SK-N-SH (cell line): ENCODE measurements at regions of chr19 and their contacts with region 1.

Region 1: DNA sequence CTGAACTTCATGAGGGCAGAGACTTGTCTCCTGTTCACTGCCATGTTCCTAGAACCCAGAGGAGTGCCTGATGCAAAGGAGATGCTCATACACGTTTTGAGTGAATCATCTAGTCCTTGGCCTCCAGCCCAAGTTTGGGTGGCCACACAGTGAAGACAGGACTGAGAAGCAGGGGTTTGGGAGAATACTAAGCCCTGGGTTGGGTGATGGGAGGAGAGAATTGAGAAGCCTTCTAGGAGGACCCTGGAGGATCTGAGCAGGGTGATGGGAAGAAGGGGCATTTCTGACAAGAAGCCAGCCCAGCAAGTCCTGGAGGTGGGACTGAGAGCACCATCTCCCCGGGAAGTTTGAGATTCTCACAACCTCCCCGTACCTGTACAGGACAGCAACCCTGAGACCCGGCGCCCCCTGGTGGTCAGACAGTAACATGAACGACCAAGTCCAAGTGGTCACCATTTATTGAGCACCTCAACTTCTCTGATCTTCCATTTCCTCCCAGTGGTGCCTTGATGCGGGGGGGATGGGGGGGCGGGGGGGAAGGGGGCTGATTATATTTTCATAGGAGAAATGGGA is 11.0 kb downstream of the CTU1 start:
- DNase-seq: peak; percentile 76
- H3K4me3 ChIP-seq: no peak overlapping the region
- H3K27ac ChIP-seq: no peak overlapping the region
- H3K4me1 ChIP-seq: no peaks in the 10 kb centered on the region; a peak in 1 of 4 replicates
- H3K27me3 ChIP-seq: no peaks in the 10 kb centered on the region
- CTCF ChIP-seq: peak; percentile 64
- EP300 ChIP-seq: no peak
- RAD21 ChIP-seq: 0 out of 2 replicates have a peak, but pooled peaks have one; percentile 6

Region 2: GRCh38 chr19:51016798-51017683 is 80.2 kb before region 1 on chr19:
- CTCF ChIA-PET with region 1: interaction called, 30 read pairs
- POLR2A ChIA-PET with region 1: no interaction called
- DNase-seq: peak; percentile 83
- H3K4me3 ChIP-seq: peak overlapping the region in 1 of 2 experiments; percentile 35; a peak in 1 of 4 replicates
- H3K27ac ChIP-seq: no peak overlapping the region
- H3K4me1 ChIP-seq: no peaks in the 10 kb centered on the region
- H3K27me3 ChIP-seq: peaks cover 74% of the 10 kb centered on the region
- CTCF ChIP-seq: peak; percentile 75
- EP300 ChIP-seq: no peak
- RAD21 ChIP-seq: peak; percentile 55

Region 3: GRCh38 chr19:51086153-51086850 is 10.9 kb before region 1 on chr19:
- CTCF ChIA-PET with region 1: interaction called, 17 read pairs
- POLR2A ChIA-PET with region 1: no interaction called
- DNase-seq: no peak
- H3K4me3 ChIP-seq: no peak overlapping the region
- H3K27ac ChIP-seq: no peak overlapping the region
- H3K4me1 ChIP-seq: no peaks in the 10 kb centered on the region
- H3K27me3 ChIP-seq: peaks cover 20% of the 10 kb centered on the region; the same call in 1 of the 2 replicates
- CTCF ChIP-seq: no peak
- EP300 ChIP-seq: no peak
- RAD21 ChIP-seq: no peak